ENCODE measurements at regions of chr1 and their contacts with region 1.

Region 1: GRCh38 chr1:62131093-62131725 is 63.4 kb upstream of the L1TD1 start:
- DNase-seq: peak; percentile 57
- ATAC-seq: peak; percentile 81
- H3K4me3 Mint-ChIP-seq: no peak overlapping the region
- H3K27ac Mint-ChIP-seq: no peak overlapping the region
- H3K4me1 Mint-ChIP-seq: no peaks in the 10 kb centered on the region
- H3K27me3 Mint-ChIP-seq: no peaks in the 10 kb centered on the region

Region 2: GRCh38 chr1:62045574-62045973 is 85.6 kb before region 1 on chr1:
- CTCF ChIA-PET with region 1: no interaction called
- POLR2A ChIA-PET with region 1: no interaction called
- DNase-seq: no peak
- ATAC-seq: no peak
- H3K4me3 Mint-ChIP-seq: no peak overlapping the region
- H3K27ac Mint-ChIP-seq: no peak overlapping the region
- H3K4me1 Mint-ChIP-seq: no peaks in the 10 kb centered on the region
- H3K27me3 Mint-ChIP-seq: no peaks in the 10 kb centered on the region

Region 3: GRCh38 chr1:62144238-62144831 is 13.1 kb after region 1 on chr1:
- CTCF ChIA-PET with region 1: interaction called, 25 read pairs
- POLR2A ChIA-PET with region 1: no interaction called
- DNase-seq: peak; percentile 59
- ATAC-seq: no peak
- H3K4me3 Mint-ChIP-seq: no peak overlapping the region
- H3K27ac Mint-ChIP-seq: no peak overlapping the region
- H3K4me1 Mint-ChIP-seq: no peaks in the 10 kb centered on the region
- H3K27me3 Mint-ChIP-seq: no peaks in the 10 kb centered on the region

Region 4: DNA sequence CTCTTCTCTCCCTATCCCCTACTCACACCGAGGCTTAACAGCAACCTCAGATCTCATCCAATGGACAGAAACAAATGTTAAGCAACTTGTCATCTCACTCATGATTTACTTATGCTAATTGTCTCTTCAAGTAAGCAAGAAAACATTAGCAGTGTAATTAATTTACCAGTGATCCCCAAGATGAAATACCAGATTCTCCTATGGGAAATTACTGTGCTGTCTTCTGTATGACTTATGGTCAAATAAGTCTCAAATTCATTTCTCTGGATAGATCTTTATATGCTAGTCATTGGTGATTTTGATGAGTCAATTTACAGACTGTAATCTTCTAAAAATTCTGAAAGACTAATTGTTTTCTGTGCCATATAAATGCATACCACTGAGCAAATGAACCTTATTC is 30.5 kb after region 1 on chr1:
- CTCF ChIA-PET with region 1: no interaction called
- POLR2A ChIA-PET with region 1: no interaction called
- DNase-seq: no peak
- ATAC-seq: no peak
- H3K4me3 Mint-ChIP-seq: no peak overlapping the region
- H3K27ac Mint-ChIP-seq: no peak overlapping the region
- H3K4me1 Mint-ChIP-seq: no peaks in the 10 kb centered on the region
- H3K27me3 Mint-ChIP-seq: no peaks in the 10 kb centered on the region

Region 5: GRCh38 chr1:62187548-62187947 is 56.3 kb after region 1 on chr1:
- CTCF ChIA-PET with region 1: no interaction called
- POLR2A ChIA-PET with region 1: no interaction called
- DNase-seq: no peak
- ATAC-seq: no peak
- H3K4me3 Mint-ChIP-seq: no peak overlapping the region
- H3K27ac Mint-ChIP-seq: no peak overlapping the region
- H3K4me1 Mint-ChIP-seq: no peaks in the 10 kb centered on the region
- H3K27me3 Mint-ChIP-seq: no peaks in the 10 kb centered on the region